B cell (primary cell): ENCODE measurements at regions of chr9 and their contacts with region 1.

Region 1: GRCh38 chr9:69121828-69122548 is 52.1 kb upstream of the TJP2 start:
- DNase-seq: peak; percentile 70
- ATAC-seq: peak; percentile 70
- H3K4me3 ChIP-seq: peak overlapping the region; percentile 45 to 89 (median 69)
- H3K4me3 Mint-ChIP-seq: peak overlapping the region; percentile 97
- H3K27ac ChIP-seq: no peak overlapping the region
- H3K27ac Mint-ChIP-seq: peak overlapping the region; percentile 72
- H3K4me1 ChIP-seq: peaks cover 12 to 16% of the 10 kb centered on the region in 2 donors
- H3K4me1 Mint-ChIP-seq: peaks cover 15% of the 10 kb centered on the region
- H3K27me3 ChIP-seq: peaks cover 0 to 6% (median 0%) of the 10 kb centered on the region in 4 experiments
- H3K27me3 Mint-ChIP-seq: no peaks in the 10 kb centered on the region
- CTCF ChIP-seq: no peak

Region 2: DNA sequence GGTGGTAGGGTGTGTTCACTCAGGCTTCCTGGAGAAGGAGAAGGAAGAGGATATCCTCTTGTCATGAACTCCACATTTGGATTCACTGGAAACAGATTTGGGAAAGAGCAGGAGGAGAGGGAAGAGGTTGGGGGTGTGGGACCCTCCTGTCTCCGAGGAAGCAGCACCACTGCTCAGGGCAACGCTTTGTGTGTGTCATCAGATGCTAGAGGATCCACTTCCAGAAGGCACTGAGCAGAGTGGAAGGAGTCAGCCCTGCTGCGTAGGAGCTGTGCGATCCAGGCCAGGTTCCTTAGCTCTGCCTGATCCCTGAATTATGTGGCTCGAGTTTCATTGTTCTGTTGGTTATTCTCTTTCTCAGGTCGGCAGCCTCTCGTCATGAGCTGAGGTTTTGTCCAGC is 14.8 kb after region 1 on chr9:
- CTCF ChIA-PET with region 1: interaction called, 3 read pairs
- POLR2A ChIA-PET with region 1: interaction called, 10 read pairs
- intact Hi-C with region 1: no loop called
- DNase-seq: no peak
- ATAC-seq: no peak
- H3K4me3 ChIP-seq: no peak overlapping the region
- H3K4me3 Mint-ChIP-seq: no peak overlapping the region
- H3K27ac ChIP-seq: no peak overlapping the region
- H3K27ac Mint-ChIP-seq: no peak overlapping the region
- H3K4me1 ChIP-seq: no peaks in the 10 kb centered on the region
- H3K4me1 Mint-ChIP-seq: no peaks in the 10 kb centered on the region
- H3K27me3 ChIP-seq: no peaks in the 10 kb centered on the region
- H3K27me3 Mint-ChIP-seq: no peaks in the 10 kb centered on the region
- CTCF ChIP-seq: no peak

Region 3: GRCh38 chr9:69174616-69175463 is 52.9 kb after region 1 on chr9:
- CTCF ChIA-PET with region 1: no interaction called
- POLR2A ChIA-PET with region 1: no interaction called
- intact Hi-C with region 1: loop called (anchors 5 kb)
- DNase-seq: peak; percentile 46
- ATAC-seq: peak; percentile 6
- H3K4me3 ChIP-seq: peak overlapping the region; percentile 32 to 58 (median 51)
- H3K4me3 Mint-ChIP-seq: peak overlapping the region; percentile 90
- H3K27ac ChIP-seq: no peak overlapping the region
- H3K27ac Mint-ChIP-seq: no peak overlapping the region
- H3K4me1 ChIP-seq: peaks cover 21 to 23% of the 10 kb centered on the region in 2 donors
- H3K4me1 Mint-ChIP-seq: peaks cover 31% of the 10 kb centered on the region
- H3K27me3 ChIP-seq: peaks cover 0 to 43% (median 27%) of the 10 kb centered on the region in 4 experiments
- H3K27me3 Mint-ChIP-seq: peaks cover 43% of the 10 kb centered on the region
- CTCF ChIP-seq: no peak

Region 4: GRCh38 chr9:69871118-69871834 is 749.3 kb after region 1 on chr9:
- CTCF ChIA-PET with region 1: no interaction called
- POLR2A ChIA-PET with region 1: no interaction called
- intact Hi-C with region 1: no loop called
- DNase-seq: no peak
- ATAC-seq: no peak
- H3K4me3 ChIP-seq: no peak overlapping the region
- H3K4me3 Mint-ChIP-seq: no peak overlapping the region
- H3K27ac ChIP-seq: no peak overlapping the region
- H3K27ac Mint-ChIP-seq: no peak overlapping the region
- H3K4me1 ChIP-seq: no peaks in the 10 kb centered on the region
- H3K4me1 Mint-ChIP-seq: no peaks in the 10 kb centered on the region
- H3K27me3 ChIP-seq: no peaks in the 10 kb centered on the region
- H3K27me3 Mint-ChIP-seq: peaks cover 14% of the 10 kb centered on the region
- CTCF ChIP-seq: no peak